Activated naive CD4-positive, alpha-beta T cell treated with anti-CD3 and anti-CD28 coated beads for 36 hours (primary cell): ENCODE measurements at regions of chr6 and their contacts with region 1.

Region 1: GRCh38 chr6:26285143-26286134 is 79.6 kb upstream of the BTN3A2 start:
- DNase-seq: peak; percentile 99
- H3K4me3 Mint-ChIP-seq: peak overlapping the region; percentile 93
- H3K27ac Mint-ChIP-seq: peak overlapping the region; percentile 100
- H3K4me1 Mint-ChIP-seq: peaks cover 16% of the 10 kb centered on the region
- H3K27me3 Mint-ChIP-seq: peaks cover 3% of the 10 kb centered on the region

Region 2: DNA sequence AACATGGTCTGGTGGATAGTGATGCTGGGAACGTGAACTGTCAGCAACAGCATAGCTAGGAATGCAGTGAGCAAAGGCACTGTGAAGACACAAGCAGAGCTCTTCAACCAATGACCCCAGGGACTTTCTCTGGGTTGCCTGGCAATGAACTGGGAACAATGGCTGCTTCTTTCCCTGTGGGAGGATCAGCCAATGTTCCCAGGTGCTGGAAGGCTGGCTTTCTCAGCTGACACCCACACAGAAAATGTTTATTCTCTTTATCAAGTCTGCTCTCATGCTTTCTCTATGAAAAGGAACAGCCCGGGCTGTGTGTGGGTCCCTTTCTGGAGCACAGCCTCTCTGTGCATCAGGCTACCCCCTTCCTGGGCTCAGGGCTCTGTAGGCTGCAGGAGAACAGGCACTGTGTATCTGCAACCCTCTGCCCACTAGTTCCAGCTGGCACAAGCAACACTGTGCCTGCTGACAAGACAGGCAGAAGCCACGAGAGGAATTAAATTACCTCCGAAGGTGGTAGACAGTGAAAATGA is 144.0 kb before region 1 on chr6:
- CTCF ChIA-PET with region 1: no interaction called
- intact Hi-C with region 1: no loop called
- DNase-seq: no peak
- H3K4me3 Mint-ChIP-seq: no peak overlapping the region
- H3K27ac Mint-ChIP-seq: no peak overlapping the region
- H3K4me1 Mint-ChIP-seq: peaks cover 3% of the 10 kb centered on the region
- H3K27me3 Mint-ChIP-seq: no peaks in the 10 kb centered on the region

Region 3: DNA sequence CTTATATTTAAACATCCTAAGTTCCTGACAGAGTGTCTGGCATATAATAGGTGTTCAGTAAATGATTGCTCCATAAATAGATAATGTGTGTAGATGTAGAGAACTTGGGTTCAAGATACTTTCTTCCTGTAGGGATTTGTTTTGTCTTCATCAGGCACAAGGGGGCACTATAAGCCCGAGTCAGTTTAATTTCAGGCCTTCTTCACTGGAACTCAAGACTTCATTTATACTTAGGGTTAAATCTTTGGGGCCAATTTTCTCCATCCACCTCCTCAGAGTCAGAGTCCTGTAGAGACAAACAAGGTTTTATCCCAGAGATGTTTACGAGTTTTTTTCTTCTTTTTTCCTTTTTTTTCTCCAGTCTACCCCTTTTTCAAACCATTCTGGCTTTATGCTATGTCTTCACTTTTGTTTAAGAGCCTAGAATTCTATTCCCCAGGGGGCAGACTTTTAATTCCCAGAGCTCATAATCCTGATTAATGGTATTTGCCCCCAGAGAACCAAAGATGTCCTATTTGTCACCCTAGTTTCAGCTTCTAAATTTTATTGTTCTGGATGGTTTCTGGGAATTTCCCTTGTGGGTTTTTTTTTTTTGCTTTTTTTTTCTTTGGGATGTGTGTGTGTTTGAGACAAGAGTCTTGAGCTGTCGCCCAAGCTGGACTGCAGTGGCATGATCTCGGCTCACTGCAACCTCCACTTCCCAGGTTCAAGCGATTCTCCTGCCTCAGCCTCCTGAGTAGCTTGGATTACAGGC is 109.8 kb before region 1 on chr6:
- CTCF ChIA-PET with region 1: no interaction called
- intact Hi-C with region 1: loop called (anchors 1 kb)
- DNase-seq: peak; percentile 77
- H3K4me3 Mint-ChIP-seq: no peak overlapping the region
- H3K27ac Mint-ChIP-seq: no peak overlapping the region
- H3K4me1 Mint-ChIP-seq: peaks cover 34% of the 10 kb centered on the region
- H3K27me3 Mint-ChIP-seq: no peaks in the 10 kb centered on the region

Region 4: GRCh38 chr6:26196846-26197648 is 88.4 kb before region 1 on chr6:
- CTCF ChIA-PET with region 1: no interaction called
- intact Hi-C with region 1: no loop called
- DNase-seq: peak; percentile 86
- H3K4me3 Mint-ChIP-seq: peak overlapping the region; percentile 96
- H3K27ac Mint-ChIP-seq: peak overlapping the region; percentile 99
- H3K4me1 Mint-ChIP-seq: peaks cover 36% of the 10 kb centered on the region
- H3K27me3 Mint-ChIP-seq: peaks cover 5% of the 10 kb centered on the region

Region 5: DNA sequence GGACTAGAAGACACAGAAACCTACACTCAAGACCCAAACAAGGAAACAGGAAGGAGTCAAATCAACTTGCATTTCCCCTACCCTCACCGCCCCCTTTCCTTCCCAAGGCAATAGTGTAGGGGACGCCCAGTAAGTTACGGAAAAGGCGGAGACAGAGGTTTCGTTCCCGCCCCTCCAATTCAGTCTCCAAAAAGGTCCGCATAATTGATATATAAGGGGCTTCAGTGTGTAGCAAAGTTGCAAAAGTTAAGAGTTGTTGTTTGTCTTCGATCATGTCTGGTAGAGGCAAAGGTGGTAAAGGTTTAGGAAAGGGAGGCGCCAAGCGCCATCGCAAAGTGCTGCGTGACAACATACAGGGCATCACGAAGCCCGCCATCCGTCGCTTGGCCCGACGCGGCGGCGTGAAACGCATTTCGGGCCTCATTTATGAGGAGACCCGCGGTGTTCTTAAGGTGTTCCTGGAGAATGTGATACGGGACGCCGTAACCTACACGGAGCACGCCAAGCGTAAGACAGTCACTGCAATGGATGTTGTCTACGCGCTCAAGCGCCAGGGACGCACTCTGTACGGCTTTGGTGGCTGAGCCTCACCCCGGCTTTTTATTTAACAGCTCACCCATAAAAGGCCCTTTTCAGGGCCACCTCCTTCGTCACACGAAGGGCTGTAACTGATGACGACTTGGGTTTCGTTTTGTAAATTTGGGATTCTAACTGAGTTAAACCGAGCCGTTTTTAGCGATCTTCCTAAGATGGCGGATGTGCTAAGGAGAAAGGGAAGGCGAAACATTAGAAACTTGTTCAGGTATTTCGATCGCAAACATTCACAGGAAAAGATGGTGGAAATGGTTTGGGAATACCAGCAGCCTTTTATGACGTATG is 45.0 kb before region 1 on chr6:
- CTCF ChIA-PET with region 1: no interaction called
- intact Hi-C with region 1: loop called (anchors 1 kb)
- DNase-seq: peak; percentile 89
- H3K4me3 Mint-ChIP-seq: peak overlapping the region; percentile 77
- H3K27ac Mint-ChIP-seq: peak overlapping the region; percentile 93
- H3K4me1 Mint-ChIP-seq: peaks cover 21% of the 10 kb centered on the region
- H3K27me3 Mint-ChIP-seq: no peaks in the 10 kb centered on the region

Region 6: DNA sequence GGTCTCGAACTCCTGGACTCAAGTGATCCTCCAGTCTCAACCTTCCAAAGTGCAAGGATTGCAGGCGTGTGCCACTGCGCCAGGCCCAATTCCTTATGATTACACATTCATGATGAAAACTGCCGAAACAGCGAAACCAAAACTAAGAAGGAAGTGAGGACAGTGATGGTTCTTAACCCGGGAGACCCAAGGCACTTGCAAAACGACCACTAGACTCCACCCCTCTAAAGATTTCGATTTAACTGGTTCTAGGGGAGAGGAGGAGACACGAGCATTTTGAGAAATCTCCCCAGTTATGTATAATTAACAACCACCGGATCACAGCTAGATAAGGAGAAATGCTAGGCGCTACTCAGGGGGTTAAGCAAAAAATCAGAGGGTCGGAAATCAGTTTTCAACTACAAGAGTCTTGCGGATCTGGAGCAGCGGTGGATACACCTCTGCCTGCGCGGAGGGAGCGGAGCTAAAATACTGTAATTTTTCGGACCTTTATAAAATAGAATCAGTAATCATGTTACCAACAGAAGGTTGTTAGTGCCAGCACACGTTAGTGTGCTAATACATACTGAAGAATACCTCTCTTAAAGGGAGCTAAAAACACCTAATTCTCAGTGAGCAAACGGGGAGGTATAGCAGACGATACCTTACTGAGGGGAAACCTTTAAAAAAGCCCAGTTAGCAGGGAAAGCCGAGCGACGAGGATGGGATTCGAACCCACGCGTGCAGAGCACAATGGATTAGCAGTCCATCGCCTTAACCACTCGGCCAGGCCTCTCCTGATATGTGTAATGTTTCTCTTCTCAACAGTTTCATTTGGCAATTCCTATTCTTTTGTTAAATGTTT is 19.6 kb after region 1 on chr6:
- CTCF ChIA-PET with region 1: no interaction called
- intact Hi-C with region 1: loop called (anchors 1 kb)
- DNase-seq: peak; percentile 79
- H3K4me3 Mint-ChIP-seq: peak overlapping the region; percentile 85
- H3K27ac Mint-ChIP-seq: peak overlapping the region; percentile 88
- H3K4me1 Mint-ChIP-seq: peaks cover 46% of the 10 kb centered on the region
- H3K27me3 Mint-ChIP-seq: no peaks in the 10 kb centered on the region

Region 7: DNA sequence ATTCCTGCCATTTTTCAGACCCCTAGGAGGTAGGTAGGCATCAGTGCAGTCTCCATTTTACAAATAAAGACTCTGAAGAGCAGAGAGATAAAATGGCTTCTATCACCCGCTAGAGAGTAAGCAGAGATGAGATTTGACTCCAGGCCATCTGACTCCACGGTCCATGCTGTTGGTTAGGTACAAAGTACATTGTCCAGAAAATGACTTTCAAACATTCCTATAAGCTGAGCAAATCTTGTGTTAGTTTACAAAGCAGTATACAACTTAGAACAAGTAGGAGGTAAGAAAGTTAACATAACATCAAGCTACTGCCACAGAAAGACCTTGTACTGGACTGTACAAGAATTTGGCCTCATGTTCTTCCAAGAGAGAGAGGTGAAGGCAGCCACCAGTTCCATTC is 229.5 kb after region 1 on chr6:
- CTCF ChIA-PET with region 1: no interaction called
- intact Hi-C with region 1: no loop called
- DNase-seq: no peak
- H3K4me3 Mint-ChIP-seq: no peak overlapping the region
- H3K27ac Mint-ChIP-seq: no peak overlapping the region
- H3K4me1 Mint-ChIP-seq: peaks cover 2% of the 10 kb centered on the region
- H3K27me3 Mint-ChIP-seq: no peaks in the 10 kb centered on the region

Region 8: DNA sequence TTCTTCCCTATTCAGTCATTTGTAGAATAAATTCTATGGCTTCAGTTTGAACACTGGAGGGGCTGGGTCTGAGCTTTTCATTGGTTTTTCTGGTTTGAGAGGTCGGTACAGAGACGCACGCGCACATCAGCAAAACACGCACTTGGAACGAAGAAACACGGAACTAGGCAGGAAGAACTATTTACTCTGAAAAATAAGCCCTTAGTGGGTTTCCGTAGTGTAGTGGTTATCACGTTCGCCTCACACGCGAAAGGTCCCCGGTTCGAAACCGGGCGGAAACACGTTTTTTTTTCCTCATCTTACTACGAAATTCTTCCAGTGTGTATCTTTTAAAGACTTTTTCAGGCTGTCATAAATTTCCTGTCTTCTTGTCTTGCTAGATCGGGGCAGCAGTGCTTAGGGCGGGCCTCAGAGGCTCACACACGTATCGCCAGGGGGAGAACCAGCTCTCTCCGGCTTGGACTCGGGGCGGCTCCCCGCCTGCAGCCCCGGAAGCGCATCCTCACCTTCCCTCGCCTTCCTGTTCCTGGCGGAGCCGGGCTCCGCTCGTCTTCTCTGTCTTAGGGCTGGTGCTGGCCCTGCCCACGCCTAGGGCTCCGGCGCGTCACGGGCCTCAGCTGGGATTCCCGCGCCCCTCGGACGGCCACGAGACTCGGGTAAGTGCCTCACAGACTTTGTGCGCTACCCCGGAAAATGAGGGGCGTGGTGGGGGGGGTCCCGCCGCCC is 252.6 kb after region 1 on chr6 and contains the start of gene HMGN4:
- CTCF ChIA-PET with region 1: no interaction called
- intact Hi-C with region 1: loop called (anchors 1 kb)
- DNase-seq: peak; percentile 82
- H3K4me3 Mint-ChIP-seq: peak within 1 kb of the TSS; percentile 87
- H3K27ac Mint-ChIP-seq: peak within 1 kb of the TSS; percentile 98
- H3K4me1 Mint-ChIP-seq: peaks cover 56% of the 10 kb centered on the region
- H3K27me3 Mint-ChIP-seq: no peaks in the 10 kb centered on the region
- total RNA-seq, gene HMGN4: 70.4 to 73.2 TPM

Region 9: DNA sequence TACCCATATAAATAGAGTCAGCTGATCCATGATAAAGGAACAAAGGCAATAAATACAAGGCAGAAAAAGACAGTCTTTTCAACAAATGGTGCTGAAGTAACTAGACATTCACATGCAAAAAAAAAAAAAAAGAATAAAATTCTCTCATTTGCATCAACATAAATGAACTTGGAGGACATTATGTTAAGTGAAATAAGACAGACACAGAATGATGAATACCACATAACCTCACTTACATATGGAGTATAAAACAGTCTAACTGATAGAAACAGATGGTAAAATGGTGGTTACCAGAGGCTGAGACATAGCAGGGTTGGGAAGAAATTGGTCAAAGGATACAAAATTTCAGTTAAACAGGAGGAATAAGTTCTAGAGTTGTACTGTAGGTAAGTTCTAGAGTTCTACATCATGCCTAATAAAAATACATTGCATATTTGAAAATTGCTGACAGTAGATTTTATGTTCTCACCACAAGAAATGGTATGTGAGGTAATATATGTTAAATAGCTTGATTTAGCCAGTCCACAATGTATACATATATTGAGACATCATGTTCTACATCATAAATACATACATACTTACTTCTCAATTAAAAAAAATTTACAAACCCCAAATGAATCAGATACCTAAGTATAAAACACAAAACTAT is 365.8 kb after region 1 on chr6:
- CTCF ChIA-PET with region 1: no interaction called
- intact Hi-C with region 1: no loop called
- DNase-seq: no peak
- H3K4me3 Mint-ChIP-seq: no peak overlapping the region
- H3K27ac Mint-ChIP-seq: no peak overlapping the region
- H3K4me1 Mint-ChIP-seq: peaks cover 2% of the 10 kb centered on the region
- H3K27me3 Mint-ChIP-seq: no peaks in the 10 kb centered on the region

Region 10: DNA sequence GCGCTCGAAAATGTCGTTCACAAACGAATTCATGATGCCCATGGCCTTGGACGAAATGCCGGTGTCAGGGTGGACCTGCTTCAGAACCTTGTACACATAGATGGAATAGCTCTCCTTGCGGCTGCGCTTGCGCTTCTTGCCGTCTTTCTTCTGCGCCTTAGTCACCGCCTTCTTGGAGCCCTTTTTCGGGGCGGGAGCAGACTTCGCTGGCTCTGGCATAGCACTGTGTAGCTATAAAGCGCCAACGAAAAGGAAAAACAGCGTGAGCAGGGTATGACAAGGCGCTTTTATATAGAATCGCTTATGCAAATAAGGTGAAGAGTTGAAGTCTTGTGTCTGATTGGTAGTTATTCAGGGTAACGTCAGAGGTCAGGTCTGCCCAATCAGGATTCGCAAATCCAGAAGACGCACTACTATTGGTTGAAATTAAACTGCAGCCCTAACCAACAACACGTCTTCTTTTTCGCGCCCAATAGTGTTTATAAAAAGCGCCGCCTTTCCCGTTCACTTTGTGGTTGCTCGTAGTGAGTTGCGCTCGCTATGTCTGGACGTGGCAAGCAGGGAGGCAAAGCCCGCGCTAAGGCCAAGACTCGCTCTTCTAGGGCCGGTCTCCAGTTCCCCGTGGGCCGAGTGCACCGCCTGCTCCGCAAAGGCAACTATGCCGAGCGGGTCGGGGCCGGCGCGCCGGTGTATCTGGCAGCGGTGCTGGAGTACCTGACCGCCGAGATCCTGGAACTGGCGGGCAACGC is 847.3 kb after region 1 on chr6:
- CTCF ChIA-PET with region 1: no interaction called
- intact Hi-C with region 1: loop called (anchors 1 kb)
- DNase-seq: peak; percentile 94
- H3K4me3 Mint-ChIP-seq: no peak overlapping the region
- H3K27ac Mint-ChIP-seq: no peak overlapping the region
- H3K4me1 Mint-ChIP-seq: peaks cover 19% of the 10 kb centered on the region
- H3K27me3 Mint-ChIP-seq: no peaks in the 10 kb centered on the region